Posterior cingulate gyrus (tissue), 11 donors: ENCODE measurements at regions of chr16 and their contacts with region 1.

Region 1: DNA sequence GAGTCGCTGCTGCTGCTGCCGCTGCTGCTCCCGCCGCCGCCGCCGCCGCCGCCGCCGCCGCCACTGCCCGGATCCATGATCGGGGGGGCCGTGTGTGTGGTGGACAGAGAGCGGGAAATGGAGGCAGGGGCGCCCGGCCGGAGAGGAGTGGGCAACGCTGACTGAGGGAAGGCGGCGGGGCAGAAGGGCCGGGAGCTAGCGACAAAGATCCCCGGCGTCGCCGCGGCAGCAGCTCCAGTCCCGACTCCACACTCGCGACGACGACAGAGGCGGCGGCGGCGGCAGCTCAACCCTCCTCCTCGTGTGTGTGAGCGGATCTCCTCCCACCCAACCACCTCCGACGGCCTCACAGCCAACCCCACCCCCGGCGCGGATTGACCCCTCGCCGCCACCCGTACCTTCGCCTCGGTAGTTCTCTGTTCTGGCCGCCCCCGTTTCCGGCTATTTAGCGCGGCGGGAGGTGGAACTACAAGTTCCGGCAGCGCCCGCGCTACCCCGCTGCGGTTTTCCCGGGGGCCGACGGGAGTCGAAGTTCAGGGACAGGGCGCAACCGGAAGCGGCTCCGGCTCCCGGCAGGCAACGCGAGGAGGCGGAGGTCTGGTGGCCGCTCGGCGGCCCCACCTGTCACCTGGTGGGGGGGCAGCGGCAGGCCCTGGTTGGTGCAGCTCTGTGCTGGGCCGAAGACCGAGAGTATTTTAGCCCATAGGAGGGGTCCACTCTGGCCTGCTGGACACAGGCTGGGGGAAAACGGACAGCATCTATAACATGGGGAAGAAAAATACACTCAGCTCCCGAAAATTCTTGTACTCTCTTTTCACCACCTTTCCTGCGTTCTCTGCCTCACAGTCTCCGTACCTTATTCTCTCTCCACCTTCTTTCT is at the start of gene GSPT1:
- DNase-seq: peak; percentile 98 to 100 (median 98)

Region 2: GRCh38 chr16:11851294-11852091 is 64.4 kb before region 1 on chr16 and contains the start of gene RSL1D1:
- intact Hi-C with region 1: loop called (anchors 1 kb)
- DNase-seq: peak; percentile 79 to 98 (median 86)

Region 3: DNA sequence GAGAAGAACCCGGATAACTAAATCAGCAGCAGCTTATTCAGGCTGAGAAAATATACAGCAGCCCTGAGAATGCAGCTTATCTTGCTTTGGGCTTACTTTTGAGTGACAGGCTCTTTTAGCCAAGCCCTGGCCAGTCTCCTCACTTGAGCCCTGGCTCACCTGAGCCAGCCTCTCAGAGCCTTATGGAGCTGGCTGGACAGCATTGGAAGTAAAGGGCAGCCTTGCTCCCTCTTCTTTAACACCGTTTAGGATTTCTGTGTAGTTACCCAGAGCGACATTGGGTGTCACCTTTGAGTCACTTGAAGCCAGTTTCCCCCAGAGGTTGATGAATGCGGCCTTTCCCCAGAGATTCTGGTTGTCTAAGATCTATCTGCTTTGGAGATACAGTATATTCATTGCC is 33.6 kb after region 1 on chr16:
- intact Hi-C with region 1: no loop called
- DNase-seq: peak in 4 of 10 donors; percentile 30 to 48 (median 38)

Region 4: DNA sequence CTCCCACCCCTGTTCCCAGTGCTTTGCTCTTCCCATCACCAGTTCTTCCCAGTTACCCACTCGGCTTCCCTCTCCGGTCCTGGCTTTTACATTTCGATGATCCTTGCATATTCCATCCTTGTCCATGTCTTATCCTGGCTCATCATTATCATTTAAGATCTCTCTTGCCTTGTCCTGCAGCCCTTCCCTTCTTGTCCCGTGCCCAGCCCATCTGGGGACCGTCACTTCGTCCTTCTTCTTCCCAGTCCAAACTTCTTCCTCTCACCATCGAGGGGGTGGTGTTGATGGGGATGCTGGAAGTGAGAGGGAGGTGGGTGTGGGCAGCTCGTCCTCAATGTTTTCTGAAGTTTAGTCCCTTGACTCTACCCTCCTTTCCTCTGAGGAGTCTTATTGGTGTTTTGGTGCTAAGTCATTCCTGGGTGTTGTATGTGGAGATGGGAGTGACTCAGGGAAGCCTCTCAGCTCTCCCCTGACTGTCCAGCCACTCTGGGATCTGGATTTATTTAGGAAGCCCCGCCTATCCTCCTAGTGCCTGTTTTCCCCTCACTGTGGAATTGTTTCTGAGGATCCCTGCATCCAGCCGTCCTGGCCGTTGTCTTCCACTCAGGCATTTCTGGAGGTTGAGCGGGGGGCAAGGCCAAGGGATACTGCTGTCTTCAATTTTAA is 61.6 kb after region 1 on chr16:
- intact Hi-C with region 1: loop called (anchors 10 kb)
- DNase-seq: peak in 2 of 10 donors; percentile 38 to 64